ENCODE measurements at regions of chr1 and their contacts with region 1.

Region 1: DNA sequence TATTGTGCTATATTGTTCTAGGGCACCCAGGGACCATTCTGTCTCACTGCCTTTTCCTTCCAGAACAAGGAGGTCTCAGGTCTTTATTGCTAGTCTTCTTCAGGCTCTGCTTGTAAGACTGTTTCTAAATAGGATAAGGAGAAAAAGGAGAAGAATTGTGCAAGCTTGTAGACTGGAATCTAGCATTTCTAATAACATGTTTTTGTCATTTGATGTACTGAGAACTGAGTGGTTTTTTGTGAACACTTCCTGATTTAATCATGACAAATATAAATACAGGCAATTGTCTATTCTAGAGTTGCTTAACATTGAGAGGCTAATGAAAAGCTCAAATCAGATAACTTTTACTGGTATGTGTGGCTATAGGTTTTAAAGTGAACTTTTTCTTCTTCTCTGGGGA is 77.6 kb downstream of the CLIC4 start:
- DNase-seq: no peak
- ATAC-seq: no peak
- H3K4me3 ChIP-seq: no peak overlapping the region
- H3K27ac ChIP-seq: no peak overlapping the region
- H3K4me1 ChIP-seq: peaks cover 5% of the 10 kb centered on the region
- H3K27me3 ChIP-seq: no peaks in the 10 kb centered on the region

Region 2: GRCh38 chr1:24769656-24770651 is 52.9 kb before region 1 on chr1:
- intact Hi-C with region 1: loop called in 1 of 4 experiments (anchors 10 kb)
- DNase-seq: no peak
- ATAC-seq: peak; percentile 88 to 91
- H3K4me3 ChIP-seq: no peak overlapping the region
- H3K27ac ChIP-seq: peak overlapping the region; percentile 85
- H3K4me1 ChIP-seq: peaks cover 8% of the 10 kb centered on the region
- H3K27me3 ChIP-seq: no peaks in the 10 kb centered on the region

Region 3: GRCh38 chr1:24888971-24889676 is 66.2 kb after region 1 on chr1:
- intact Hi-C with region 1: no loop called
- DNase-seq: no peak
- ATAC-seq: no peak
- H3K4me3 ChIP-seq: no peak overlapping the region
- H3K27ac ChIP-seq: no peak overlapping the region
- H3K4me1 ChIP-seq: no peaks in the 10 kb centered on the region
- H3K27me3 ChIP-seq: no peaks in the 10 kb centered on the region